CD4-positive, alpha-beta T cell (primary cell): ENCODE measurements at regions of chr6 and their contacts with region 1.

Region 1: DNA sequence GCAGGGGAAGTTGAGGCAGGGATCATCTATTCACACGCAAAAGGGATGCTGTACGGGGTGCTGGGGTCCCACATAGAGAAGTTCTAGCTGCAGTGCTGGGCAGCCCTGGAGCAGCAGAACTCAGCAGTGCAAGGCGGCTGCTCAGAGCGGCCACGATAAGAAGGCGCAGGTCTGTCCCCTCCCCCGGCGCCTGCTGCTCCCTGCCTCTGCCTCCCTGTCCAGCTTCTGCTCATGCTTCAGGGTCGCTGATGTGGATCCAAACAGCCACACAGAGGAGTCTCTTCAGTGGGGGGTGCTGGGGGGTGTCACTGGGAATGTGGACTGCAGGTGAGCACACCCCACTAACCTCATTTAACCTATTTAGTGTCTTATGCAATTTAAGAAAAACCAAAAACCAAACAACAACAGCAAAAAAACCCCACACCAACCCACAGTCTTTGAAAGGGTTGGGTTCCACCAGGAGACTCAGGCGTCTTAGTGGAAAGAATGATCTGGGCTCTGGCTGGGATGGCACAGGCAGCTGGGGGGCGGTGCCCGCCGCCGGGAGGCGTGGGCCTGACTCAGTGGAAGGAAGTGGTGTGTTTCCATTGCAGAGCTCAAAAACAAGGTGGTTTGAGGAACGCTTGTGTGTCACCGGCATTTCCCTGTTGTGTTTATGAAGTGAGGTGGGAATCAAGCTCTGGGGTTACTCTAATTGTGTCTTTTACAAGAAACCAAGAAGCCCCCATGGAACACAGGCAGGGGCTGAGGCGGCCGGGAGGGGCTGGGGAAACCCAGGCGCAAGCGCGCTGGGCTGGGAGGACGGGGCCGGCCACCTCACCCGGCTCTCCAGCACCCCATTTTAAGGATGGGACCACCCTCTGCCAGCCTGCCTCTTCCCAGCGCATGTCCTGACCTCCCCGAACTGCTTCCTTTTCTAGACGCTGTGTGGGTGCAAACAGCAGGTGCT is 55.1 kb downstream of the IRF4 start:
- DNase-seq: peak; percentile 40 to 88 (median 79)
- ATAC-seq: peak; percentile 74
- H3K4me3 ChIP-seq: peak overlapping the region; percentile 45
- H3K4me3 Mint-ChIP-seq: peak overlapping the region; percentile 87
- H3K27ac ChIP-seq: peak overlapping the region in 1 of 2 donors; percentile 59
- H3K27ac Mint-ChIP-seq: peak overlapping the region; percentile 81
- H3K4me1 ChIP-seq: peaks cover 47% of the 10 kb centered on the region
- H3K4me1 Mint-ChIP-seq: peaks cover 56% of the 10 kb centered on the region
- H3K27me3 ChIP-seq: no peaks in the 10 kb centered on the region
- H3K27me3 Mint-ChIP-seq: no peaks in the 10 kb centered on the region
- CTCF ChIP-seq: no peak

Region 2: GRCh38 chr6:399785-400534 is 46.7 kb before region 1 on chr6:
- CTCF ChIA-PET with region 1: interaction called, 4 read pairs
- POLR2A ChIA-PET with region 1: interaction called, 65 read pairs
- intact Hi-C with region 1: loop called (anchors 5 kb)
- DNase-seq: peak in 8 of 14 experiments; percentile 18 to 59 (median 46)
- ATAC-seq: peak; percentile 80
- H3K4me3 ChIP-seq: no peak overlapping the region
- H3K4me3 Mint-ChIP-seq: peak overlapping the region; percentile 76
- H3K27ac ChIP-seq: no peak overlapping the region
- H3K27ac Mint-ChIP-seq: peak overlapping the region; percentile 87
- H3K4me1 ChIP-seq: peaks cover 50% of the 10 kb centered on the region
- H3K4me1 Mint-ChIP-seq: peaks cover 55% of the 10 kb centered on the region
- H3K27me3 ChIP-seq: no peaks in the 10 kb centered on the region
- H3K27me3 Mint-ChIP-seq: no peaks in the 10 kb centered on the region
- CTCF ChIP-seq: no peak

Region 3: DNA sequence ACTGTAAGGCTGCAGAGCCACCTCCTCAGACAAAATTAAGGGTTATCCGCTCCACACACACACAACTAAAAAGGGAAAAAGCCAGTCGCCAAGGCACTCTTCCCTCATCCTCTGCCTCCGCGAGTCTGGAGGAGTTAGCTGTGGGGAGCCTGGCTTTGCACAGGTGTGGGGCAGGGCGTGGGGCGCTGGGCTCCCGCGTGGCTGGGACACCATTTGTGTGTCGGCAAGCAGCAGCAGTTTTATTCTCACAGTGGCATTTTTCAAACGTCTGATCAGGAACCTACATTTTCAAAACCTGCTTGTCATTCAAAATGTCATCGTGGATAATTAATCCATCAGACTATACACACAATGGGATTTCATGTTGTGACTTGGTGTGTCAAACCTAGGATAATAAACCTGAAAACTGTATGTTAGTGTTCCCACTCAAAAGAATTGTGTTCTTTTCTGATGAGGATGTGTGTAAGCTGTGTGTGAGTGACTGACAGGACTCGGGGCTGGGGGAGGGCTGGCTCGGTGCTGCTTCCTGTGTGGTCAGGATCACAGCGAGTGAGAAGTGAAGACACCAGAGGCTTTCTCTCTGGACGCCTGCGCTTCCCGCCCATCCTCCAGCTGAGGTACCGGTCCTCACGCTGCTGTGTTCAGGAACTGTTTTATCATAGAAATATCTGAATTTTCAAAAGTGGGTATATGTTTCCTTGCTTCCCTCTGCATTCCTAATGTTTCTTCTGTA is 27.9 kb after region 1 on chr6:
- CTCF ChIA-PET with region 1: no interaction called
- POLR2A ChIA-PET with region 1: interaction called, 18 read pairs
- intact Hi-C with region 1: no loop called
- DNase-seq: peak; percentile 42 to 90 (median 68)
- ATAC-seq: peak; percentile 100
- H3K4me3 ChIP-seq: peak overlapping the region; percentile 12
- H3K4me3 Mint-ChIP-seq: peak overlapping the region; percentile 39
- H3K27ac ChIP-seq: no peak overlapping the region
- H3K27ac Mint-ChIP-seq: no peak overlapping the region
- H3K4me1 ChIP-seq: peaks cover 24% of the 10 kb centered on the region
- H3K4me1 Mint-ChIP-seq: peaks cover 53% of the 10 kb centered on the region
- H3K27me3 ChIP-seq: no peaks in the 10 kb centered on the region
- H3K27me3 Mint-ChIP-seq: no peaks in the 10 kb centered on the region
- CTCF ChIP-seq: no peak

Region 4: DNA sequence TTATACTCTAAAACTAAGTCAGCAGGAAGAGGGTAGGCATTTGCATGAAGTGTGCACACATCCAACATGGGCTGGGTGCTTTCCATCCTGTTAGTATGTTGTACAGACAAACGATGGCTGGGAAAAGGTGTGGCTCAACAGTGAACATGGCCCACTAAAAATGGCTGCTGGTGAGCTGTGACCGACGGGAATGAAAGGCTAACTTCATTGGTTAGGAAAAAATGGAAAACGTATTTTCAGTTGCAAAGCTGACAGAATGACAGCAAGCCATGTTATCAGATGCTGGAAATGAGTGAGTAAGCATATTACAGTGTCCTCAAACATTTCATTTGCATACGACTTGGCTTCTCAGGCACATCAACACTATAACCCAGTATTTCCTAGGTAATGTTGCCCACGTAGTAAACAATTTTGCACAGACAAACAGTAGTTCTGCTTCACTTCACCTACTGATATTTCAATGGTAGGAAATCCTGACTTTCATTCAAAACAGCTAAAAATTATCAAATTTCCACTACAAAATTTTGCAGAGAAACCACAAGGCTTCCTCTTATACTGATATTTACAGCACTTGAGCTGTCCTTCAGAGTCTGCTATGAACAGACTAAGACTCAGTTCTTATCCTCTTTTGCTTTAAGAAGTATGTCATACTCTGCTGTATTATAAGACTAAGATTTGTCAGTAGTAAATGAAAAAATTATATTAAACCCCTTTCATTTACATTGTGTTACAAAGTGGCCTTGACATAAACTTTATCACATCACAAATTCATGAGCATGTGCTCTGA is 43.8 kb after region 1 on chr6:
- CTCF ChIA-PET with region 1: interaction called, 3 read pairs
- POLR2A ChIA-PET with region 1: interaction called, 17 read pairs
- intact Hi-C with region 1: loop called in 1 of 2 experiments (anchors 2 kb)
- DNase-seq: peak in 2 of 14 experiments; percentile 25 to 32
- ATAC-seq: peak; percentile 48
- H3K4me3 ChIP-seq: no peak overlapping the region
- H3K4me3 Mint-ChIP-seq: peak overlapping the region; percentile 66
- H3K27ac ChIP-seq: no peak overlapping the region
- H3K27ac Mint-ChIP-seq: peak overlapping the region; percentile 83
- H3K4me1 ChIP-seq: peaks cover 37% of the 10 kb centered on the region
- H3K4me1 Mint-ChIP-seq: peaks cover 65% of the 10 kb centered on the region
- H3K27me3 ChIP-seq: no peaks in the 10 kb centered on the region
- H3K27me3 Mint-ChIP-seq: no peaks in the 10 kb centered on the region
- CTCF ChIP-seq: no peak

Region 5: DNA sequence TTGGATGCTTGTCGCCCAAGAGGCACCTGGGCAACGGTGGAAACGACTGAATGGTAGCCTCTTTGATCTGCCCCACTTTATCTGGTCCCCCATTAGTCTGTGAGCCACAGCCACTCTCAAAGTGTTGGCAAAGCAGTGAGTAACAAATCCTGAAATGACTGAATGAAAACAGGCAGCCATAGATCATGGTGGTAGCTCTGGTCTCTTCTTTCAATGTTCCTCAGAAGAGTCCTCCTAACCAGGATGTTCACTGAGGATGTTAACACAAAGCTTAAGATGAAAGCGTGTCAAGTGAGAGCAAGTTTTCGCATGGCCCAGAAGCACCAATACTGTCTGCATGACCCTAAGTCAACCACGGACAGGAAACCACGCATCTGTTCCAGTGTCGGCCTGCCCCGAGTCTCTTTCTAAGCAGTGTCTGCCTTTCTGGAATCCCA is 52.1 kb after region 1 on chr6:
- CTCF ChIA-PET with region 1: no interaction called
- POLR2A ChIA-PET with region 1: interaction called, 7 read pairs
- intact Hi-C with region 1: loop called in 1 of 2 experiments (anchors 5 kb)
- DNase-seq: peak in 6 of 14 experiments; percentile 17 to 69 (median 48)
- ATAC-seq: peak; percentile 57
- H3K4me3 ChIP-seq: no peak overlapping the region
- H3K4me3 Mint-ChIP-seq: peak overlapping the region; percentile 43
- H3K27ac ChIP-seq: peak overlapping the region in 1 of 2 donors; percentile 8
- H3K27ac Mint-ChIP-seq: peak overlapping the region; percentile 76
- H3K4me1 ChIP-seq: peaks cover 30% of the 10 kb centered on the region
- H3K4me1 Mint-ChIP-seq: peaks cover 54% of the 10 kb centered on the region
- H3K27me3 ChIP-seq: no peaks in the 10 kb centered on the region
- H3K27me3 Mint-ChIP-seq: no peaks in the 10 kb centered on the region
- CTCF ChIP-seq: no peak